Heart left ventricle (tissue), 16 donors: ENCODE measurements at regions of chr2 and their contacts with region 1.

Region 1: DNA sequence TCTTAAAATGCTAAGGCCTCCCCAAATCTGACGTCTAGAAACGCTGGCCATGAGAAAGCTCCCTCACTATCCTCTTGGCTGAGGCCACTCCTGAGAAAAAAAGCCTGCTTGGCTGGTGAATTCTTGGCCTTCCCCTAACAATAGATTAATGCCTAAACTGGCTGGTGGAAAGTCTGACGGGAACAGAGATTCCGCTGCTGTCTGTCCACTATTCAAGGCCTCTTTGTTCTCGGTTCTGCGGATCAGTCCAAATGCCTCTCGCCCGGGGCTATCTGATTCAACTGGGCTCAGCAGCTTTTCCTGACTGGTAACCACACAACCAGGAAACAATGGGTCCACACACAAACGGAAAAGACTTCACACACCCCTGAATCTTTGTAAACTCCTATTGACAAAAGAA is 27.2 kb downstream of the PXDN start:
- DNase-seq: peak in 3 of 5 donors; percentile 57 to 71 (median 64)
- ATAC-seq: peak; percentile 28 to 60 (median 48)
- H3K4me3 ChIP-seq: no peak overlapping the region
- H3K27ac ChIP-seq: peak overlapping the region; percentile 13 to 87 (median 68)
- H3K4me1 ChIP-seq: peaks cover 7 to 78% (median 53%) of the 10 kb centered on the region in 12 donors
- H3K27me3 ChIP-seq: no peaks in the 10 kb centered on the region
- CTCF ChIP-seq: no peak
- POLR2A ChIP-seq: no peak

Region 2: DNA sequence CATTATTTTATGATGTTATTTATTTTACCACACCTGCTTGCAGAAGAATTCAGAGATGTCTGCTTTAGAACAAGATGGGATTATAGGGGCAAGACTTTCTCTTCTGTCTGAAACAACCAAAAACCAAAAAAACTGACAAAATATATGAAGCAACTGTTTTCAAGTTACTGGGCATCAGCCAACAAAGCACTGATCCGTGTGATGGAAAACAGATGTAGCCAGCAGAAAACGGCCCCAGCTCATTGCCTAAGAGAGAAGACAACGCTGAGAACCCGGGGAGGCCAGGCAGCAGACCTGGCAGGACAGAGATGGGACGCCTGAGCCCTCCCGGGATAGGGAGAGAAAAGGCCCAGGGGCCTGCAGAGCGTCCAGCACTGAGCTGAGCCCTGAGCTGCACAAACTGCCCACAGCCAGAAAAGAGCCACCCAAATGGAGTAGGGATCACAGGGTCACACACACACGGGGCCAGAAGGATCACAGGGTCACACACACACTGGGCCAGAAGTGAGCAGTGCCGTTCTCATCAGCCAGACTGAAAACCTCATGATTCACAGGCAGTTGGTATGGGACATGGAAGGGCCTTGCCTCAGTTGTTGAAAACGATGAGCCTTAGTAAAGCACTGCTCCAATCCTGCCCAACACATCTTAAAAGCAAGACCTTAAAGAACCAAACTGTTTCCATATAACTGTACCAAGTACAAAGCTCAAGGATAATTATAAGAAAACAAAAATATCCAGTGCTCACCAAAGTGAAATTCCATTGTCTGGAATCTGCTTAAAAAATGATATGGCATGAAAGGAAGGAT is 15.1 kb after region 1 on chr2:
- intact Hi-C with region 1: loop called in 1 of 10 experiments (anchors 2 kb)
- DNase-seq: peak in 3 of 5 donors; percentile 16 to 43 (median 26)
- ATAC-seq: peak in 3 of 4 donors; percentile 29 to 61 (median 58)
- H3K4me3 ChIP-seq: no peak overlapping the region
- H3K27ac ChIP-seq: peak overlapping the region in 11 of 12 donors; percentile 48 to 88 (median 72)
- H3K4me1 ChIP-seq: peaks cover 6 to 66% (median 45%) of the 10 kb centered on the region in 12 donors
- H3K27me3 ChIP-seq: no peaks in the 10 kb centered on the region
- CTCF ChIP-seq: no peak
- POLR2A ChIP-seq: no peak